ENCODE measurements at regions of chr6 and their contacts with region 1.

Region 1: GRCh38 chr6:53956068-53956711 is 155.1 kb upstream of the MLIP start:
- DNase-seq: peak; percentile 64 to 97 (median 82)

Region 2: GRCh38 chr6:53725791-53726431 is 230.3 kb before region 1 on chr6:
- intact Hi-C with region 1: loop called (anchors 5 kb)
- DNase-seq: peak; percentile 67 to 97 (median 84)

Region 3: GRCh38 chr6:53734473-53735299 is 221.5 kb before region 1 on chr6:
- intact Hi-C with region 1: loop called (anchors 5 kb)
- DNase-seq: peak in 2 of 10 donors; percentile 28 to 74

Region 4: GRCh38 chr6:53794720-53795253 is 161.4 kb before region 1 on chr6 and contains the start of gene LRRC1:
- intact Hi-C with region 1: loop called (anchors 1 kb)
- DNase-seq: peak; percentile 83 to 98 (median 90)

Measured in posterior cingulate gyrus (tissue), 11 donors.